Ovary (tissue), 10 donors: ENCODE measurements at regions of chr2 and their contacts with region 1.

Region 1: DNA sequence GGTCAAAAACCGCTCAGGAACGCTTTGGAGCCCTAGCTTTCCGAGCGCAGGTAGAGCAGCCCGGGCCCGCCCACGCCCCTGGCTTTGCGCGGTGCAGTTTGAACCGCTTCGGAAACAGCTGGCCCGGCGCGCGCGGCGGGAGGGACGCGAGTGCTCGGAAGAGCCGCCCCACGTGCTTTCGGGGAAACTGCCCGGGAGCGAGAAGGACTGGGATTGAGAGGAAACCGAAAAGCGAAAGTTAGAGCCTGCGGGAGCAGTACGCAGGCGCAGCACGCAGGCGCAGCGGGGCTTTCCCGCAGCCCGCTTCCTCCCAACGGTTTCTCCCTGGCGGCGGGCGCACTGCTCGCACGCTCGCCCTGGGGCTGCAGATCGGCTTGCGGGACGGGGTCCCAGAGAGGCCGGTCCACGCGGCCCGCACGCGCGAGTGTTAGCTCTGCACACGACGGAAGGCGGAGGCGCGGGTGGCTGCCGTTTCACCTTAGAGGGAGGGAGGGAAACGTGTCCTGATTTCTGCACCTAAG is 6.3 kb upstream of the STAT1 start:
- DNase-seq: peak; percentile 90 to 97 (median 93)
- H3K4me3 ChIP-seq: peak overlapping the region; percentile 75
- H3K27ac ChIP-seq: peak overlapping the region; percentile 33 to 67
- H3K4me1 ChIP-seq: peaks cover 3% of the 10 kb centered on the region
- H3K27me3 ChIP-seq: no peaks in the 10 kb centered on the region
- CTCF ChIP-seq: peak in 2 of 3 donors; percentile 10 to 34
- EP300 ChIP-seq: peak; percentile 99
- POLR2A ChIP-seq: peak; percentile 59

Region 2: GRCh38 chr2:190781604-190782198 is 238.6 kb before region 1 on chr2:
- intact Hi-C with region 1: loop called in 1 of 4 experiments (anchors 10 kb)
- DNase-seq: peak in 3 of 5 donors; percentile 33 to 60 (median 44)
- H3K4me3 ChIP-seq: no peak overlapping the region
- H3K27ac ChIP-seq: no peak overlapping the region
- H3K4me1 ChIP-seq: no peaks in the 10 kb centered on the region
- H3K27me3 ChIP-seq: no peaks in the 10 kb centered on the region
- CTCF ChIP-seq: peak in 2 of 3 donors; percentile 33 to 43
- EP300 ChIP-seq: no peak
- POLR2A ChIP-seq: no peak

Region 3: GRCh38 chr2:190961918-190962487 is 58.3 kb before region 1 on chr2:
- intact Hi-C with region 1: no loop called
- DNase-seq: no peak
- H3K4me3 ChIP-seq: no peak overlapping the region
- H3K27ac ChIP-seq: no peak overlapping the region
- H3K4me1 ChIP-seq: no peaks in the 10 kb centered on the region
- H3K27me3 ChIP-seq: no peaks in the 10 kb centered on the region
- CTCF ChIP-seq: no peak
- EP300 ChIP-seq: no peak
- POLR2A ChIP-seq: no peak

Region 4: GRCh38 chr2:191114403-191114886 is 94.2 kb after region 1 on chr2:
- intact Hi-C with region 1: no loop called
- DNase-seq: no peak
- H3K4me3 ChIP-seq: no peak overlapping the region
- H3K27ac ChIP-seq: no peak overlapping the region
- H3K4me1 ChIP-seq: no peaks in the 10 kb centered on the region
- H3K27me3 ChIP-seq: no peaks in the 10 kb centered on the region
- CTCF ChIP-seq: no peak
- EP300 ChIP-seq: no peak
- POLR2A ChIP-seq: no peak